Right ventricle myocardium superior (tissue), 1 donor: ENCODE measurements at regions of chr18 and their contacts with region 1.

Region 1: GRCh38 chr18:55110436-55110835 is 151.2 kb upstream of the CCDC68 start:
- DNase-seq: no peak
- ATAC-seq: peak; percentile 81

Region 2: DNA sequence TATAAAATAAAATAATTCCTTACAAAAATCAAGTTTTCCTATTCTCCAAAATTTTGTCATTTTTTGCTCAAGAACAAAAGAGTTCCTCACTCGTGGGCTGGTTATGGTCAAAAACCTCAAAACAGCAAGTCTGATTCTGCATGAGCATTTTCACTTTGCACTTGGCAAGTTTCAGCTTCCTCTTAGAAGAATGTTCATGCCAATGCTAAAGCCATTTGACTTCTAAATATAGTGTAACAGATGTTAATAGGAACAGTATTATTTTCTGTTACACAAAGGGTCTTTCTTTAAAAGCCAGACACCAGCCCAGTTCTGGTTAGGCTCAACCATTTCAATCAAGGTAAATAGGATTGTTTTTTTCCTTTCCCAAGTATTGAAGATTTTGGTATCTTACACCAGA is 110.1 kb after region 1 on chr18:
- intact Hi-C with region 1: loop called (anchors 10 kb)
- DNase-seq: no peak
- ATAC-seq: peak; percentile 49